ENCODE measurements at regions of chr5 and their contacts with region 1.

Region 1: DNA sequence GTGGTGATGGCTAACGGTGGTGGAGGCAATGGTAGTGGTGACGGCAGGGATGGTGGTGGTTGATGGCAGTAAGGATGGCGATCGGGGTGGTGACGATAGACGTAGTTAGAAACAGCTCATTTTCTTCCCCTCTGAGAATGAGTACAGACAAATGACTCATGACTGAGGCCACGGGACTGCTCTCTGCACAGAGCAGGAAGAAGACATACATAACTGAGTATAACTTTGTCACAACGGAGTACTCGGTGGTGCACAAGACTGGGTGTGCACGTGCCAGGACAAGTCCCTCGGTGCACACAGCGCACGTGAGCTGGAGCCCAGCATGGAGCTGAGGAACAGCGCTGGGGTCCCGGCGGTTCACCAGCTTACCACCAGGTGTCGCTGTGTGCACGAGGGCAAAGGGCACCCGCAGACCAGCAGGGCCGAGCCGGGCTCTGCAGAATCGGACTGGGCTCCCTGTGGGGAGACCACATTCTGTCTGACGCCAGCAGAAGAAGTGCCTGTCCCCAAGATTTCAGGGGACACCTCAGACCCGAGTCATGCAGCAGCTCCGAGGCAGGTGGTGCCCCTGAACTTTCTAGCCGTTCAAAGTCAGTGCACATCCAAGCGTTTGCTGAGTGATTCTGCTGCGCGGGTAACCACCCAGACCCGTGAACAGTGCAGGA is 188.6 kb downstream of the FSTL4 start:
- DNase-seq: peak; percentile 54
- H3K4me3 ChIP-seq: no peak overlapping the region
- H3K27ac ChIP-seq: no peak overlapping the region
- H3K4me1 ChIP-seq: no peaks in the 10 kb centered on the region
- H3K27me3 ChIP-seq: peaks cover 0 to 4% of the 10 kb centered on the region in 2 experiments
- CTCF ChIP-seq: peak; percentile 91 to 99
- POLR2A ChIP-seq: no peak

Region 2: DNA sequence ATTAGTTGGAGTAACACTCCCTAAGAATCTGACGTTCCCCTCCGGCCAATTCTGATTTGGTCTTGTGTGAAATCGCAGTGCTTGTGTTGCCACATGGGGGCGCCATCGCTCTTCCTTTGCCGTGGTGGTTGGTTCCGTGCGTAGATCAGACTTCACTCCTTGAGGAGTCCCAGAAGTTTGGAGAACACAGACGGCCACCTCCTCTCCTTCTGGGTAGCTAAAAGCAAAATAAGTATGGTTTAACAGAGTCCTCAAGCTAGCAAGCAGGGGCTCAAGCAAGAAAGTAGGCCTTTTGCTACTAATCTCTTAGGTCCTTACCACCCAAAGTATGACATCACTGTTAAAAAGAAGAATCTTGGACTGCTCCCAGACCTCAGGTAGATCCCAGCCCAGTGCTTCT is 312.5 kb before region 1 on chr5:
- CTCF ChIA-PET with region 1: interaction called, 5 read pairs
- POLR2A ChIA-PET with region 1: no interaction called
- dilution Hi-C with region 1: no loop called
- intact Hi-C with region 1: loop called (anchors 5 kb)
- DNase-seq: peak; percentile 83
- H3K4me3 ChIP-seq: no peak overlapping the region
- H3K27ac ChIP-seq: no peak overlapping the region
- H3K4me1 ChIP-seq: no peaks in the 10 kb centered on the region
- H3K27me3 ChIP-seq: no peaks in the 10 kb centered on the region
- CTCF ChIP-seq: peak; percentile 83 to 84
- POLR2A ChIP-seq: no peak

Region 3: GRCh38 chr5:133460172-133460758 is 36.5 kb after region 1 on chr5:
- CTCF ChIA-PET with region 1: interaction called, 13 read pairs
- POLR2A ChIA-PET with region 1: no interaction called
- dilution Hi-C with region 1: no loop called
- intact Hi-C with region 1: loop called (anchors 2 kb)
- DNase-seq: no peak
- H3K4me3 ChIP-seq: no peak overlapping the region
- H3K27ac ChIP-seq: no peak overlapping the region
- H3K4me1 ChIP-seq: peaks cover 17% of the 10 kb centered on the region
- H3K27me3 ChIP-seq: no peaks in the 10 kb centered on the region
- CTCF ChIP-seq: peak; percentile 53 to 57
- POLR2A ChIP-seq: no peak

Region 4: GRCh38 chr5:133544346-133544745 is 120.6 kb after region 1 on chr5:
- CTCF ChIA-PET with region 1: interaction called, 10 read pairs
- POLR2A ChIA-PET with region 1: no interaction called
- dilution Hi-C with region 1: no loop called
- intact Hi-C with region 1: no loop called
- DNase-seq: no peak
- H3K4me3 ChIP-seq: no peak overlapping the region
- H3K27ac ChIP-seq: no peak overlapping the region
- H3K4me1 ChIP-seq: no peaks in the 10 kb centered on the region
- H3K27me3 ChIP-seq: peaks cover 10 to 13% of the 10 kb centered on the region in 2 experiments
- CTCF ChIP-seq: no peak
- POLR2A ChIP-seq: no peak

Region 5: DNA sequence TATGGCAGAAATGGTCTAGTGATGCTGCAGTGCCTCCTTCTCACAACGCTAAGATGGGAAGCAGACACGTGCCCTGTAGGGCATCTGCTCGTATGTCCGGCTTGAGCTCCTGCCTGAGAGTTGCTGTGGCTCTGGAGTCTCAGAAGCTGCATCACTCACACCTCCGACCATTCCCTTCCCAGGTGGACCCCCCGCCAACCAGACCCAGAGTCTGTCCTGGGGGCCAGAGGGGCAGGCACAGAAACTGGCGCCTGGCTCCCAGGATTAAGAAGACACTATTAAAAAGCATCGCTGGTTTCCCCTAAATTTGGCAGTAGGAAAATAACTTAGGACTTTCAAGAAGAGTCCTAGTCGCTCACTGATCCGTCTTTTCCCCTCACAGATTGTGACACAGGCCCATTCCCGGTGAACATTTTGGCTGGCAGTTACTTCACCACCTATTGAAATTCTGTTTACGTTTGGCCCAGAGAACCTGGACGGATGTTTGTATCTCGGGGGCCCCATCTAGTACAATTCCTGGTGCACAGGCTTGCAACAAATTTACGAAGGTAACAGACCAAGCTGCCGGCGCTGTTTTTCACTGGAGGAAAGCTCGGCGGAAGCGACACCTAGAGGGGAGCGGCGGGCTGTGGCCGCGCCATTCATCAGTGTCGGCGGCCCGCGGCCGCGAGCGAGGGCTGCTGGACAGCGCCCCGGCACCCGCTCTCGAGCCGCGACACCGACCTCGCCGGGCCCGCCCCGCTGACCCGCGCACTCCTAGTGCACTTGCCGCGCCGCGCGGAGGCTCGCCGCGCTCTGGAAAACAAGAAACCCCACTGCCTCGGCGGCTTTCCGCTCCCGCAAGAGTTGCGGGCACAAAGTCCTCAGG is 187.0 kb after region 1 on chr5:
- CTCF ChIA-PET with region 1: interaction called, 30 read pairs
- POLR2A ChIA-PET with region 1: no interaction called
- dilution Hi-C with region 1: no loop called
- intact Hi-C with region 1: loop called (anchors 2 kb)
- DNase-seq: peak; percentile 26
- H3K4me3 ChIP-seq: no peak overlapping the region
- H3K27ac ChIP-seq: no peak overlapping the region
- H3K4me1 ChIP-seq: peaks cover 17% of the 10 kb centered on the region
- H3K27me3 ChIP-seq: peaks cover 46 to 71% of the 10 kb centered on the region in 2 experiments
- CTCF ChIP-seq: peak; percentile 32 to 37
- POLR2A ChIP-seq: no peak

Region 6: DNA sequence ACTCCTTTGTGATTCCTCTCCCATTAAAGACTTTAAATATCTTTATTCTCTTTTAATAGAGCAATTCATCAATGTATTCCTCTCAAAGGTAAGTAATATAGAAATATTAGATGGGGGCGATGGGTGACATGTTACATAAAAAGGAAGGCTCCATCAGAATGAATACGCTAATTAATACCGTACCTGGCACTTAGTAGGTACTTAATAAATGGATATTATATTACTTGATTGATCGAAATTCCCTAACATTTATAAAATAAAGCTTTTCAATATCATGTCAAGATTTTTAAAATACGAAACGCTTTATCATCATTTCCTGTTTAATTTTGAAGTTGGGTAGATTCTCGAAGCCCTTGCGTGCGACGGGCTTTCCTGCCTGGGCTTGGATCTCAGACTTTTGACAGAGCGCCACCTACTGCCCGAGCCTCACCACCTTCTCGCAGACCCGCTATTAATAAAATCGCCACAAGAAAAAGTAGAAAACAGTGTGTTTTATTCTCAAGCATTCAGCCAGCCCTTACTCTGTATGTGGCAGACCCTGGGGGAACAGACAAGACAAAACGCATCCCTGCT is 445.3 kb after region 1 on chr5:
- CTCF ChIA-PET with region 1: interaction called, 77 read pairs
- POLR2A ChIA-PET with region 1: no interaction called
- dilution Hi-C with region 1: no loop called
- intact Hi-C with region 1: loop called (anchors 1 kb)
- DNase-seq: peak; percentile 76
- H3K4me3 ChIP-seq: no peak overlapping the region
- H3K27ac ChIP-seq: no peak overlapping the region
- H3K4me1 ChIP-seq: peaks cover 6% of the 10 kb centered on the region
- H3K27me3 ChIP-seq: no peaks in the 10 kb centered on the region
- CTCF ChIP-seq: peak; percentile 75 to 82
- POLR2A ChIP-seq: no peak

Measured in endothelial cell of umbilical vein (primary cell).